Natural killer cell (primary cell): ENCODE measurements at regions of chr10 and their contacts with region 1.

Region 1: GRCh38 chr10:101818119-101818871 is at the start of gene OGA:
- DNase-seq: peak; percentile 93 to 99
- ATAC-seq: peak; percentile 89 to 98 (median 90)
- H3K4me3 ChIP-seq: peak within 1 kb of the TSS; percentile 95
- H3K4me3 Mint-ChIP-seq: peak within 1 kb of the TSS; percentile 97
- H3K27ac ChIP-seq: peak within 1 kb of the TSS; percentile 77
- H3K27ac Mint-ChIP-seq: peak within 1 kb of the TSS; percentile 89 to 90
- H3K4me1 ChIP-seq: peaks cover 27% of the 10 kb centered on the region
- H3K4me1 Mint-ChIP-seq: peaks cover 55 to 62% of the 10 kb centered on the region in 2 donors
- H3K27me3 ChIP-seq: no peaks in the 10 kb centered on the region
- H3K27me3 Mint-ChIP-seq: no peaks in the 10 kb centered on the region
- CTCF ChIP-seq: no peak
- total RNA-seq, gene OGA: 427 to 488 (median 481) TPM

Region 2: DNA sequence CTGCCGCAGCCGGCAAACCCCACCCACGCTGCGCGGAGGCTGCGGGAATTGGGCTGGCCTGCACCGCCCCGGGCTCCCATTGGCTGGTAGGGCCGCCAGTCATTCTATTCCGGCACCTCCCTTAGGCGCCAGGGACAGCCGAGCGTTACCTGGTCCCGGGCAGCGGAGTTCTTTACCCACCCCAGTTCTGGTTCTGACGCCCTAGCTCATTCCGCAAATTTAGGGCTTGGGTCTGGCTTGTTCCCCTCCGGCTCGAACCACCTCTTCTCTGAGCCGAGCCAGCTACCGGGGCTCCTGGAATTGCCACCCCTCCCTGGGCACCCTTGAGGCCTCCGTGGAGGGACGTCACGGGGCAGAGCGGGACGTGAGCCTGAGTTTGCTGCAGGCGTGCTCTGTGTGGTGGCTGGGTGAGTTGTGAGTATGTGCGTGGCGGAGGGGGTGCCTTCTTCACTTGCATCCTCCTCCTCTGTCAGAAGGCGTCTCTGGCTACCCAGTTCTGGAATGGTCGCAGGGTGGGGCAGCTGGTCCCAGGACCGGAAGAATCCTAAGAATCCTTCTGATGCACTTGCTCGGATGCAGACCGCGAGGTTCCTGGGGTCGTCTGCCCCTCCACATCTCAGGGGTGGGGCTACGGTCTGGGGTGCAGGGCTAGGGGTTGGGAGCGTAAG is 787.0 kb before region 1 on chr10 and contains the starts of genes PDZD7 and SFXN3:
- intact Hi-C with region 1: no loop called
- DNase-seq: peak; percentile 96 to 98
- ATAC-seq: peak; percentile 76 to 91 (median 85)
- H3K4me3 ChIP-seq: peak within 1 kb of the TSS; percentile 50
- H3K4me3 Mint-ChIP-seq: peak within 1 kb of the TSS; percentile 88
- H3K27ac ChIP-seq: peak within 1 kb of the TSS; percentile 98
- H3K27ac Mint-ChIP-seq: peak within 1 kb of the TSS; percentile 83 to 89
- H3K4me1 ChIP-seq: peaks cover 28% of the 10 kb centered on the region
- H3K4me1 Mint-ChIP-seq: peaks cover 27 to 28% of the 10 kb centered on the region in 2 donors
- H3K27me3 ChIP-seq: no peaks in the 10 kb centered on the region
- H3K27me3 Mint-ChIP-seq: peaks cover 0 to 7% of the 10 kb centered on the region in 2 donors
- CTCF ChIP-seq: no peak
- total RNA-seq, gene PDZD7: 0.35 to 1.2 (median 0.52) TPM
- total RNA-seq, gene SFXN3: 59.7 to 74.5 (median 68.9) TPM

Region 3: GRCh38 chr10:101569838-101570766 is 248.2 kb before region 1 on chr10:
- intact Hi-C with region 1: no loop called
- DNase-seq: peak; percentile 86 to 88
- ATAC-seq: peak; percentile 90 to 98 (median 94)
- H3K4me3 ChIP-seq: peak overlapping the region; percentile 62
- H3K4me3 Mint-ChIP-seq: peak overlapping the region; percentile 55
- H3K27ac ChIP-seq: no peak overlapping the region
- H3K27ac Mint-ChIP-seq: no peak overlapping the region
- H3K4me1 ChIP-seq: peaks cover 18% of the 10 kb centered on the region
- H3K4me1 Mint-ChIP-seq: peaks cover 6 to 15% of the 10 kb centered on the region in 2 donors
- H3K27me3 ChIP-seq: peaks cover 32% of the 10 kb centered on the region
- H3K27me3 Mint-ChIP-seq: peaks cover 34 to 38% of the 10 kb centered on the region in 2 donors
- CTCF ChIP-seq: peak; percentile 85

Region 4: GRCh38 chr10:101782811-101783735 is 35.2 kb before region 1 on chr10 and contains the start of gene NPM3:
- intact Hi-C with region 1: loop called (anchors 1 kb)
- DNase-seq: peak; percentile 75 to 86
- ATAC-seq: peak; percentile 78 to 83 (median 82)
- H3K4me3 ChIP-seq: peak within 1 kb of the TSS; percentile 77
- H3K4me3 Mint-ChIP-seq: peak within 1 kb of the TSS; percentile 100
- H3K27ac ChIP-seq: peak within 1 kb of the TSS; percentile 70
- H3K27ac Mint-ChIP-seq: peak within 1 kb of the TSS; percentile 93 to 96
- H3K4me1 ChIP-seq: peaks cover 55% of the 10 kb centered on the region
- H3K4me1 Mint-ChIP-seq: peaks cover 55 to 58% of the 10 kb centered on the region in 2 donors
- H3K27me3 ChIP-seq: peaks cover 9% of the 10 kb centered on the region
- H3K27me3 Mint-ChIP-seq: peaks cover 7 to 11% of the 10 kb centered on the region in 2 donors
- CTCF ChIP-seq: no peak
- total RNA-seq, gene NPM3: 8.2 to 9.0 (median 8.5) TPM

Region 5: GRCh38 chr10:101797403-101798059 is 20.8 kb before region 1 on chr10:
- intact Hi-C with region 1: no loop called
- DNase-seq: no peak
- ATAC-seq: no peak
- H3K4me3 ChIP-seq: no peak overlapping the region
- H3K4me3 Mint-ChIP-seq: no peak overlapping the region
- H3K27ac ChIP-seq: no peak overlapping the region
- H3K27ac Mint-ChIP-seq: peak overlapping the region in 1 of 2 donors; percentile 9
- H3K4me1 ChIP-seq: peaks cover 2% of the 10 kb centered on the region
- H3K4me1 Mint-ChIP-seq: peaks cover 24 to 38% of the 10 kb centered on the region in 2 donors
- H3K27me3 ChIP-seq: no peaks in the 10 kb centered on the region
- H3K27me3 Mint-ChIP-seq: no peaks in the 10 kb centered on the region
- CTCF ChIP-seq: no peak

Region 6: DNA sequence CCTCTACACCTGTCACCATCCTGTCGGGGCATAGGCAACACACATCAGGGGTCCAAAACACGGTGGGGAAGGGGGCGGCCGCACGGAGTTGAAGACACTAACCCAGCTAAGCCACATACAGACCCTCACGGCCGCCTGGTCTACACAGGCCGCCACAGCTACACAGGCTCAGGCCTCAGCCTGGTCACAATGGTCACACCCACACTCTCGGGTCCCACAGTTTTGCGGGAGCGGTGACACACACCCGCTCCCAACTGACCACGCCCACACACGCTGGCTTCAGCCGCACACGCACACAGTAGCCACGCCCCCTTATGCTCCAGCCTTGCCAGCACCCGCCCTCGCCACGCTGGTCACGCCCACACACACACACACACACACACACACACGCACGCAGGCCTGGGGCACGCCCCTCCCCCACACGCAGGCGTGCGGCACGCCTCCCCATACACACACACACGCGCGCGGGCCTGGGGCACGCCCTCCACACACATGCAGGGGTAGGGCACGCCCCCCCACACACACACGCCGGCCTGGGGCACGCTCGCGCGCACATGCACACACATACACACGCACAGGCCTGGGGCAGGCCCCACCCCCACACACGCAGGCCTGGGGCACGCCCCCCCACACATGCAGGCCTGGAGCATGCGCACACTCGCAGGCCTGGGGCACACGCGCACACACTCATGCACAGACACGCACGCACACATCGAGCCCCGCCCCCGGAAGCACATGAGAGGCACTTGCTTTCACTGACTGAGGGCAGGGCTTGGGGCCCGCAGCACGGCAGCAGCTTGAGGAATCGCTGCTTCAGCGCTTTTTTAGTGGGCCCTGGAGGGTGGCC is 12.2 kb after region 1 on chr10:
- intact Hi-C with region 1: loop called (anchors 1 kb)
- DNase-seq: peak; percentile 82 to 98
- ATAC-seq: peak; percentile 77 to 93 (median 80)
- H3K4me3 ChIP-seq: peak overlapping the region; percentile 47
- H3K4me3 Mint-ChIP-seq: peak overlapping the region; percentile 90
- H3K27ac ChIP-seq: peak overlapping the region; percentile 82
- H3K27ac Mint-ChIP-seq: peak overlapping the region; percentile 93 to 94
- H3K4me1 ChIP-seq: peaks cover 43% of the 10 kb centered on the region
- H3K4me1 Mint-ChIP-seq: peaks cover 30 to 42% of the 10 kb centered on the region in 2 donors
- H3K27me3 ChIP-seq: no peaks in the 10 kb centered on the region
- H3K27me3 Mint-ChIP-seq: no peaks in the 10 kb centered on the region
- CTCF ChIP-seq: no peak

Region 7: DNA sequence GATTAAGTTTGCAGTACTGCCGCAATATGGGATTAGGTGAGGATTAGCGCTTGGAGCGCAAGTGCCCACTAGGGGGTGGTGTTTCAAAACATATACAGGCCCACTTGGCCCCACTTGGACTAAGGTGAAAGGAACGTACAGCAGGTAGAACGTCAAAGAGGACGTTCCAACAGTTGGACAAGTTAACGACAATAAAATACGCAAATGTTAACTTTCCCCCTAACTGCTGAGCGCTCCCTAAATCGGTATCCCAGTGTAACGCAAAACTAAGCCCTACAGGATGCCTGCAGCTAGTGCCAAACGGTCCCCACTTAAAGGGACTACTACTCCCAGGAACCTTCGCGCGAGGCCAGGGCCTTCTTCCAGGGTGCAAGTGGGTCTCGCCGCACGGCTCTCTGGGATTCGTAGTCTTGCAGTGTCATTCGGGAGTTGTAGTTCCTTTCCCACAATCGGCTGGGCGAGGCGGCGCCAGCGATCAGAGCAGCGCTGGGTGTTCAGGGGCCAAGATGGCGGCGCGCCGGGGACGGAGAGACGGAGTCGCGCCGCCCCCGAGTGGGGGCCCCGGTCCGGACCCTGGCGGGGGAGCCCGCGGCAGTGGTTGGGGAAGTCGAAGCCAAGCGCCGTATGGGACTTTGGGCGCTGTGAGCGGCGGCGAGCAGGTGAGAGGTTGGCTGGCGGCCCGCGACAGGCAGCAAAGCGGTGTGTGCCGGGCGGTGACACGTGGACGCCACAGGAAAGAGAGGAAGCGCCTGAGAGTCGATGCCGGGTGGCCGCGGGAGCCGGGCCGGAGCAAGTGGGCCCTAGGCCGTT is 314.5 kb after region 1 on chr10 and contains the start of gene PPRC1:
- intact Hi-C with region 1: loop called (anchors 1 kb)
- DNase-seq: peak; percentile 94 to 98
- ATAC-seq: peak; percentile 94 to 99 (median 96)
- H3K4me3 ChIP-seq: peak within 1 kb of the TSS; percentile 96
- H3K4me3 Mint-ChIP-seq: peak within 1 kb of the TSS; percentile 98
- H3K27ac ChIP-seq: peak within 1 kb of the TSS; percentile 86
- H3K27ac Mint-ChIP-seq: peak within 1 kb of the TSS; percentile 93 to 97
- H3K4me1 ChIP-seq: peaks cover 27% of the 10 kb centered on the region
- H3K4me1 Mint-ChIP-seq: peaks cover 33 to 37% of the 10 kb centered on the region in 2 donors
- H3K27me3 ChIP-seq: no peaks in the 10 kb centered on the region
- H3K27me3 Mint-ChIP-seq: no peaks in the 10 kb centered on the region
- CTCF ChIP-seq: peak; percentile 96
- total RNA-seq, gene PPRC1: 29.1 to 48.0 (median 37.7) TPM